Activated naive CD4-positive, alpha-beta T cell treated with anti-CD3 and anti-CD28 coated beads for 36 hours (primary cell): ENCODE measurements at regions of chr13 and their contacts with region 1.

Region 1: DNA sequence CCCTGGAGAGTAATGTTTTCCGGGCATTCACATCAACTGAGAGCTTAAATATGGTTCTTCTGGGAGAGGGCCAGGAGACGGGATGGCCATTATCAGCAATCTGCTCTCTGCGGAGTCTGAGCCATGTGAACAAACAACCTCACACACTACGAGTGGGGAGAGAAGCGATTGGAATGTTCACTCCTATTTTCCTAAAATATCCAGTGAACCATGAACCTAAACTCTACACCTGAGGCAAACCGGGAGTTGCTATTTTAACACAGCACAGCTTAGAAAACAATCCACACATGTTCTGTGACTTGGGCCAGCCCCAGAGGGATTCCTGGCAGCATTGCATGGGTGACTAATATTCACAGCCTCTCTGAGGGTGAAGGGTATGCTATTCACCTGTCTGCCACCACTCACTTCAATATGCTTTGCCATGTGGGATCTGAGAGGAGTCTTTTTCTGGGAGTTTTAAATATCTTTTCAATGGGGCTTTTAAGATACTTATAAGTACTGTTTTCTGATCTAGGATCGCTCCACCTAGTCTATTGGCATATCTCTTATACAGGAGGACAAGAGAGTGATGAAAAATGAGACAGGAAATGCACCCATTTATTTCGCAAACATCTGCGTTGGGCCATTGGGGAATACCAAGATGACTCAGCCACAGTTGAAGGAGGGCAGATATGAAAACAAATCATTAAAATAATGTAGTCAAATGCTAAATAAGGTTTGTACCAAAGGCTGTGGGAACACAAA is 72.6 kb upstream of the SERP2 start:
- DNase-seq: peak; percentile 72
- H3K4me3 Mint-ChIP-seq: no peak overlapping the region
- H3K27ac Mint-ChIP-seq: peak overlapping the region; percentile 77
- H3K4me1 Mint-ChIP-seq: peaks cover 45% of the 10 kb centered on the region
- H3K27me3 Mint-ChIP-seq: peaks cover 5% of the 10 kb centered on the region

Region 2: DNA sequence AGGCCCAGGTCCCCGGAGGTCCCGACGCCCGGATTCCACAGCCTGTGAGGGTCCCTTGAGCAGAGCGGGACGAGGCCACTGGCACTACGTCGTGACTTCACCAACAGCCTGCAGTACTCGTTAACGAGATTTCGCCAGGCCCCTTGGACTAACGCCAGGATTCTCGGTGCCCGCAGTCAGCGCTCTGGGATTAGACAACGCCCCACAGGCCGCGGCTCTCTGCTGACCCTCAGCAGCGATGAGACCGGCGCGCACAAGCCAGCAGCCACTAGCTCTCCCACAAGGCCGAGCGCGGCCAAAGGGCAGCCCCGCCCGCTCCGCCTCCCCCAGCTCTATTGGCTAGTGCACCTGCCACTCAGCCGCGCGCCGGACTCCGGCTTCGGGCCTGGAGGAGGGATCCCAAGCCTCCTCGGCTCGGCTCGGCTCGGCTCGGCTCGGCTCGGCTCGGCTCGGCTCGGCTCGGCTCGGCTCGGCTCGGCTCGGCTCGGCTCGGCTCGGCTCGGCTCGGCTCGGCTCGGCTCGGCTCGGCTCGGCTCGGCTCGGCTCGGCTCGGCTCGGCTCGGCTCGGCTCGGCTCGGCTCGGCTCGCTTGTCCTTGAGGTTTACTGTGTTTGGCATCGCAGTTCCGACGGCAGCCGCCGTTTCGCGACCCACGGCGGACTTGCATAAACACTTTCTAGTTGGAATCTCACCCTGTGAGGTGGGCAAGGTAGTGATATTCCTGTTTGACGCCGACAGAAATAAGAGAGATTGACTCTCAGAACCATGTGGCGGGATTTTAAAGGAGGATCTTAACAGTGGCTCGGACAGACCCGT is 159.1 kb before region 1 on chr13:
- CTCF ChIA-PET with region 1: no interaction called
- intact Hi-C with region 1: loop called (anchors 5 kb)
- DNase-seq: peak; percentile 95
- H3K4me3 Mint-ChIP-seq: peak overlapping the region; percentile 89
- H3K27ac Mint-ChIP-seq: peak overlapping the region; percentile 86
- H3K4me1 Mint-ChIP-seq: peaks cover 14% of the 10 kb centered on the region
- H3K27me3 Mint-ChIP-seq: no peaks in the 10 kb centered on the region

Region 3: DNA sequence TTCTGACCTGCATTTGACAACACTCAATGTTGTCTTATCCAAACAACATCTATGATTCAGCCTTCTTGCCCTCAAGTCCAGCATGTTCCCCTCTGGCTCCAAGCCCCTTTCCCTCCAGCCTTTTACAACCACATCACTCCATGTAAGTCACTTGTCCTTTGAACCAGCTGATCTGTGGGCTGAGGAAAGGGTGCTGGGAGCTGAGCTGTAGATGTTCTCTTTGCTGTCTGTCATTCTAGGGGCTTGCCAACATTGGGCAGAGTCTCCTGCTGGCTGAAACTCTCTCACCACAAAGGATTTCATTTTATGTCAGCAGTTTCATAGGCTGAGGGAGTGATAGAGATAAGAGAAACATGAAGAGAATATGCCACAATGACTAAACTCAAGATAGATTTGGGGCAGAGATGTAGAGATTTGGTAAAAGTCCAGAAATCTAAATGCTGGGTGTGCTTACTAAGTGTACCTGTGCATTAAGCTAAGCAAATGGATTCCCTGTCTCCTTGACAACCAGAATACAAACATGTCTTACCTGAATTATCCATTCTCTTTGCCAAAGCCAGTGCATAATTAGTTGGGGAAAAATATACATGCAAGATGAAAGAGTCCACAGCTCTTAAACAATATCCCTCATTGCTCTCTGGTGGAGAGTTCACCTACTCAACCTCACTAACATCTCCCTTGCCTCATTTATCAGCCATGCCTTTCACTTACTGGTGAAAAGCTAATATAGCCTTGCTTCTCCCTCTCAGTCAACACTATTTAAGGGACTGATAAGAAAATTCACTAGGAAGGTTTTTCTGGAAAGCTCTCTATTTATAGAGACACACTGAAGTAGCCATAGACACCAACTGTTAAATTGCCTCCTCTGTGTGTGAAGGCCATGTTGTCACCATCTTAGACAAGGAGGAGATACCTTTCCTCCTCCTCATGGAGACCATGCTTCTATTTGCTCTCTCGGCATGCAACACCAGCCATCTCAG is 103.0 kb before region 1 on chr13:
- CTCF ChIA-PET with region 1: no interaction called
- intact Hi-C with region 1: loop called (anchors 2 kb)
- DNase-seq: peak; percentile 65
- H3K4me3 Mint-ChIP-seq: no peak overlapping the region
- H3K27ac Mint-ChIP-seq: no peak overlapping the region
- H3K4me1 Mint-ChIP-seq: peaks cover 36% of the 10 kb centered on the region
- H3K27me3 Mint-ChIP-seq: peaks cover 6% of the 10 kb centered on the region

Region 4: GRCh38 chr13:44274452-44275205 is 26.4 kb before region 1 on chr13:
- CTCF ChIA-PET with region 1: no interaction called
- intact Hi-C with region 1: loop called (anchors 1 kb)
- DNase-seq: peak; percentile 27
- H3K4me3 Mint-ChIP-seq: peak overlapping the region; percentile 70
- H3K27ac Mint-ChIP-seq: peak overlapping the region; percentile 89
- H3K4me1 Mint-ChIP-seq: peaks cover 65% of the 10 kb centered on the region
- H3K27me3 Mint-ChIP-seq: no peaks in the 10 kb centered on the region

Region 5: GRCh38 chr13:44312898-44313551 is 12.0 kb after region 1 on chr13:
- CTCF ChIA-PET with region 1: no interaction called
- intact Hi-C with region 1: loop called (anchors 1 kb)
- DNase-seq: peak; percentile 43
- H3K4me3 Mint-ChIP-seq: no peak overlapping the region
- H3K27ac Mint-ChIP-seq: peak overlapping the region; percentile 42
- H3K4me1 Mint-ChIP-seq: peaks cover 14% of the 10 kb centered on the region
- H3K27me3 Mint-ChIP-seq: peaks cover 21% of the 10 kb centered on the region